ENCODE measurements at regions of chr12 and their contacts with region 1.

Region 1: GRCh38 chr12:75444429-75445136 is 36.0 kb upstream of the GLIPR1 start:
- DNase-seq: peak; percentile 11 to 24 (median 12)
- H3K4me3 ChIP-seq: no peak overlapping the region
- H3K4me3 Mint-ChIP-seq: peak overlapping the region in 1 of 2 donors; percentile 62
- H3K27ac ChIP-seq: peak overlapping the region in 1 of 2 donors; percentile 59
- H3K27ac Mint-ChIP-seq: peak overlapping the region; percentile 68 to 92 (median 85)
- H3K4me1 ChIP-seq: peaks cover 15 to 23% of the 10 kb centered on the region in 2 donors
- H3K4me1 Mint-ChIP-seq: peaks cover 28% of the 10 kb centered on the region
- H3K27me3 ChIP-seq: no peaks in the 10 kb centered on the region
- H3K27me3 Mint-ChIP-seq: peaks cover 0 to 2% (median 0%) of the 10 kb centered on the region in 3 donors
- CTCF ChIP-seq: no peak

Region 2: GRCh38 chr12:75334384-75335030 is 110.1 kb before region 1 on chr12 and contains the start of gene GLIPR1L1:
- intact Hi-C with region 1: no loop called
- DNase-seq: peak; percentile 76 to 87 (median 83)
- H3K4me3 ChIP-seq: peak within 1 kb of the TSS; percentile 11 to 69 (median 12)
- H3K4me3 Mint-ChIP-seq: peak within 1 kb of the TSS; percentile 71 to 90
- H3K27ac ChIP-seq: no peak within 1 kb of the TSS
- H3K27ac Mint-ChIP-seq: peak within 1 kb of the TSS in 1 of 7 donors; percentile 72
- H3K4me1 ChIP-seq: peaks cover 16 to 18% of the 10 kb centered on the region in 2 donors
- H3K4me1 Mint-ChIP-seq: peaks cover 18% of the 10 kb centered on the region
- H3K27me3 ChIP-seq: peaks cover 0 to 6% of the 10 kb centered on the region in 2 donors
- H3K27me3 Mint-ChIP-seq: peaks cover 4 to 14% (median 9%) of the 10 kb centered on the region in 3 donors
- CTCF ChIP-seq: peak; percentile 89
- polyA plus RNA-seq, gene GLIPR1L1: not detected

Region 3: DNA sequence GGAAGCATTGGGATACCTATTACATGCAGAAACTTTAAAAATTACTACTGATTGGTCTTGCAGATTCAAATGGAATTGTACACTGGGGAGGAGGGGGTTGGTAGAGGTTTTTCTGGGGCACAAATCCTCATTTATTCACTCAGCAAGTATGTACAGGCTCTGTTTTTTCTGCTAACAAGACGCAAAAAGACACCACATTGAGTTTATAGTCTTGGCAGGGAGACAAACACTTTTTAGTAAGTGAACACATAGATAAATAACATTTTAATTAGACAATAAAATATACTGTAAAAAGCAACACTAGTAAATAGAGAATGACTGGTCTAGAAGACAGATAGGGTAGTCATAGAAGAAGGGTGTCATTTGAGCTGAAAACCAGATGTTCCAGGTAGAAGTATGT is 29.9 kb before region 1 on chr12:
- intact Hi-C with region 1: no loop called
- DNase-seq: no peak
- H3K4me3 ChIP-seq: no peak overlapping the region
- H3K4me3 Mint-ChIP-seq: no peak overlapping the region
- H3K27ac ChIP-seq: no peak overlapping the region
- H3K27ac Mint-ChIP-seq: no peak overlapping the region
- H3K4me1 ChIP-seq: no peaks in the 10 kb centered on the region
- H3K4me1 Mint-ChIP-seq: no peaks in the 10 kb centered on the region
- H3K27me3 ChIP-seq: no peaks in the 10 kb centered on the region
- H3K27me3 Mint-ChIP-seq: no peaks in the 10 kb centered on the region
- CTCF ChIP-seq: no peak

Region 4: GRCh38 chr12:75489613-75490210 is 45.1 kb after region 1 on chr12:
- intact Hi-C with region 1: loop called in 1 of 2 experiments (anchors 5 kb)
- DNase-seq: peak in 1 of 3 donors; percentile 32
- H3K4me3 ChIP-seq: no peak overlapping the region
- H3K4me3 Mint-ChIP-seq: no peak overlapping the region
- H3K27ac ChIP-seq: peak overlapping the region in 1 of 2 donors; percentile 51
- H3K27ac Mint-ChIP-seq: peak overlapping the region; percentile 6 to 65 (median 31)
- H3K4me1 ChIP-seq: peaks cover 18 to 55% of the 10 kb centered on the region in 2 donors
- H3K4me1 Mint-ChIP-seq: peaks cover 51% of the 10 kb centered on the region
- H3K27me3 ChIP-seq: no peaks in the 10 kb centered on the region
- H3K27me3 Mint-ChIP-seq: no peaks in the 10 kb centered on the region
- CTCF ChIP-seq: no peak